K562 (cell line): ENCODE measurements at regions of chr6 and their contacts with region 1.

Region 1: GRCh38 chr6:37691904-37692806 is 5.5 kb downstream of the MDGA1 start:
- DNase-seq: peak; percentile 85 to 91 (median 90)
- ATAC-seq: peak; percentile 96
- H3K4me3 ChIP-seq: no peak overlapping the region
- H3K27ac ChIP-seq: no peak overlapping the region
- H3K4me1 ChIP-seq: peaks cover 0 to 19% of the 10 kb centered on the region in 2 experiments; a peak in 3 of 5 replicates
- H3K27me3 ChIP-seq: peaks cover 45 to 89% of the 10 kb centered on the region in 2 experiments
- CTCF ChIP-seq: peak; percentile 96 to 99 (median 98)
- EP300 ChIP-seq: no peak
- POLR2A ChIP-seq: no peak
- RAD21 ChIP-seq: peak; percentile 98 to 99

Region 2: GRCh38 chr6:37324131-37325033 is 367.8 kb before region 1 on chr6:
- CTCF ChIA-PET with region 1: interaction called, 24 read pairs
- POLR2A ChIA-PET with region 1: interaction called, 3 read pairs
- in situ Hi-C with region 1: no loop called
- intact Hi-C with region 1: loop called (anchors 5 kb)
- DNase-seq: no peak
- ATAC-seq: no peak
- H3K4me3 ChIP-seq: no peak overlapping the region
- H3K27ac ChIP-seq: no peak overlapping the region
- H3K4me1 ChIP-seq: no peaks in the 10 kb centered on the region; a peak in 1 of 5 replicates
- H3K27me3 ChIP-seq: no peaks in the 10 kb centered on the region
- CTCF ChIP-seq: no peak
- EP300 ChIP-seq: no peak
- POLR2A ChIP-seq: no peak
- RAD21 ChIP-seq: no peak

Region 3: DNA sequence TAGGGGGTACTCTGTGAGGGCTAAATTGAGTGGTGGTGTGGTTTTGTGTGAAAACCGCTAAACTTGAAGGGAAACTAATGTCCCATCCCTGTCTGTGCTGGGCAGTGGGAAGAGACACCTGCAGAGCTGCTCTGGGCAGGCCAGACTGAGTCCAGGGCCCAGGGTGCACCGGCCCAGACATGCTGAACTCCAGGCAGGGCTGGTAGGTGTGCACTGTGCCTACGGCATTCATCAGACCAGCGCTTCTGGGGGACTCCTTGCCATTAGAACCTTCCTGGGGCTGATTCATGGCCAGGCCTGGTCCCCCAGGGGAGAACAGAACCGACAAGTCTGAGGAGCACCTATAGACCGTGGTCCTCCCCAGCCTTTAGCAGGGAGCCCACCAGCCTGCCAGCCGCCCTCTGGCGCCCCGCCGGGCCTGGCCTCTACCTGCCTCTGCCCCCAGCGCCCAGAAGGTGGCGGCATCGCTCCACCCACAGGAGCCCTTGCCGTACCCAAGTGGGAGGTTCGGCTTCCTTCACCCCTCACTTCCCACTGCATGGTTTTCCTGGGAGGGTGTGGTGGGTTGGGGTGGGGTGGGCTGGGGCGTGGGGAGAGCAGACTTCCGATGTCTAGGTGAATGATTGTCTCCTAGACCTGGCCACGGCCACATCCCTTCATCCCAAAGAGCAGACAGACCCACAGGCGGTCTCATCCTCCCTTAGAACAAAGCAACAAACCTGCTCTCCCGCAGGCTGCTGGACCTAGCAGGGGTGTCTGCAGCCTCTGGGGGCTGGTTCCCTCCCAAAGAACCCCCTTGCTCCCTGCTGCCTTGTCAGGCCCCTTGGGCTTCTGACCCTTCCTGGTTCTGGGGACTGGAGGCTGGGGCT is 208.0 kb before region 1 on chr6:
- CTCF ChIA-PET with region 1: interaction called, 18 read pairs
- POLR2A ChIA-PET with region 1: no interaction called
- in situ Hi-C with region 1: no loop called
- intact Hi-C with region 1: loop called (anchors 2 kb)
- DNase-seq: peak; percentile 73 to 88 (median 86)
- ATAC-seq: peak; percentile 91
- H3K4me3 ChIP-seq: no peak overlapping the region
- H3K27ac ChIP-seq: no peak overlapping the region
- H3K4me1 ChIP-seq: peaks cover 6 to 21% of the 10 kb centered on the region in 2 experiments; a peak in 4 of 5 replicates
- H3K27me3 ChIP-seq: no peaks in the 10 kb centered on the region
- CTCF ChIP-seq: peak; percentile 83 to 98 (median 96)
- EP300 ChIP-seq: no peak
- POLR2A ChIP-seq: no peak
- RAD21 ChIP-seq: peak; percentile 71 to 87

Region 4: DNA sequence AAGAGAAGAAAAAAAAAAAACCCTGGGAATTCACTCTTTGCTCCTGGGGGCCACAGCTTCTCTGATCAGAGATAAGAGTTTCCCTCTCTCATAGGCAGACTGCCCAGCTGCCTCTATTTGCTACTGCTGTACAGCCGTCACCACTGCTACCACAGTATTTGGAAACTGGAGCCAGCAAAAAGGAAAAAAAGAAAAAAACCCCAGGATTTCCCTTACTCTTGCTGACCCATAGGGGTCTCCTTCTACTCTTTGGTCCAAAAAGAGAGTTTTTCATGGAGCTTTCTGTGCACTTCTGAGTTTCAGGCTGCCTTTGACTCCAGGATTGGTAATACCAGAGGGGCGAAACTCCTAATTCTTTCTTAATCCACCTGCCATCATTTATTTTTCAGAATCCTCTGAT is 84.2 kb before region 1 on chr6:
- CTCF ChIA-PET with region 1: no interaction called
- POLR2A ChIA-PET with region 1: no interaction called
- in situ Hi-C with region 1: no loop called
- intact Hi-C with region 1: loop called (anchors 10 kb)
- DNase-seq: peak in 2 of 4 experiments; percentile 42 to 55
- ATAC-seq: peak; percentile 76
- H3K4me3 ChIP-seq: no peak overlapping the region
- H3K27ac ChIP-seq: no peak overlapping the region
- H3K4me1 ChIP-seq: no peaks in the 10 kb centered on the region
- H3K27me3 ChIP-seq: peaks cover 9 to 45% of the 10 kb centered on the region in 2 experiments; a peak in 4 of 5 replicates
- CTCF ChIP-seq: peak; percentile 54 to 75 (median 60)
- EP300 ChIP-seq: no peak
- POLR2A ChIP-seq: no peak
- RAD21 ChIP-seq: peak; percentile 59 to 70

Region 5: GRCh38 chr6:37653933-37654565 is 38.1 kb before region 1 on chr6:
- CTCF ChIA-PET with region 1: no interaction called
- POLR2A ChIA-PET with region 1: no interaction called
- in situ Hi-C with region 1: no loop called
- intact Hi-C with region 1: loop called (anchors 5 kb)
- DNase-seq: peak; percentile 79 to 90 (median 86)
- ATAC-seq: peak; percentile 83
- H3K4me3 ChIP-seq: no peak overlapping the region
- H3K27ac ChIP-seq: no peak overlapping the region
- H3K4me1 ChIP-seq: peaks cover 0 to 17% of the 10 kb centered on the region in 2 experiments; a peak in 1 of 5 replicates
- H3K27me3 ChIP-seq: peaks cover 11 to 30% of the 10 kb centered on the region in 2 experiments
- CTCF ChIP-seq: peak; percentile 72 to 93 (median 93)
- EP300 ChIP-seq: no peak
- POLR2A ChIP-seq: no peak
- RAD21 ChIP-seq: peak; percentile 64 to 72

Region 6: DNA sequence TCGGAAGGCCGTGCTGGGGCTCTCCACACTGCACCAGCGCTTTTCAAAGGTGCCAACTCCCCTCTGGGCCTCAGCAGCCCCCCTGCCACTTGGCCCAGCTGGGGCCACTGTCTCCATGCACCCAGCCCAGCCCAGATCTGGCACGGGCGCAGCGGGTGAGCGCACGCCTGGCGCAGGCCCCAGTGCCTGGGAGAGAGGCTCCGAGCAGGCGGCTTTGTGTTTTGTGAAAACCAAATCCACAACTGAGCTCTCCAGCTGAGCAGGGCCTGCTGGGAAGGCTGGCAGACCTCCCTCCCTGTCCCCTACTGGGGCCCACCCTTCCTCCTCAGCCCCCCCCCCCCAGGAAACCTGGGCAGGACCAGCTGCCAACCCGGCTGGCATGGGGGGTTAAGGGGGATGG is 11.5 kb before region 1 on chr6:
- CTCF ChIA-PET with region 1: no interaction called
- POLR2A ChIA-PET with region 1: no interaction called
- in situ Hi-C with region 1: no loop called
- intact Hi-C with region 1: no loop called
- DNase-seq: no peak
- ATAC-seq: no peak
- H3K4me3 ChIP-seq: no peak overlapping the region
- H3K27ac ChIP-seq: no peak overlapping the region
- H3K4me1 ChIP-seq: no peaks in the 10 kb centered on the region
- H3K27me3 ChIP-seq: peaks cover 36 to 84% of the 10 kb centered on the region in 2 experiments
- CTCF ChIP-seq: no peak
- EP300 ChIP-seq: no peak
- POLR2A ChIP-seq: no peak
- RAD21 ChIP-seq: no peak

Region 7: GRCh38 chr6:37745748-37746147 is 53.6 kb after region 1 on chr6:
- CTCF ChIA-PET with region 1: no interaction called
- POLR2A ChIA-PET with region 1: no interaction called
- in situ Hi-C with region 1: no loop called
- intact Hi-C with region 1: no loop called
- DNase-seq: no peak
- ATAC-seq: no peak
- H3K4me3 ChIP-seq: no peak overlapping the region
- H3K27ac ChIP-seq: no peak overlapping the region
- H3K4me1 ChIP-seq: no peaks in the 10 kb centered on the region
- H3K27me3 ChIP-seq: peaks cover 54 to 79% of the 10 kb centered on the region in 2 experiments
- CTCF ChIP-seq: no peak
- EP300 ChIP-seq: no peak
- POLR2A ChIP-seq: no peak
- RAD21 ChIP-seq: no peak

Region 8: DNA sequence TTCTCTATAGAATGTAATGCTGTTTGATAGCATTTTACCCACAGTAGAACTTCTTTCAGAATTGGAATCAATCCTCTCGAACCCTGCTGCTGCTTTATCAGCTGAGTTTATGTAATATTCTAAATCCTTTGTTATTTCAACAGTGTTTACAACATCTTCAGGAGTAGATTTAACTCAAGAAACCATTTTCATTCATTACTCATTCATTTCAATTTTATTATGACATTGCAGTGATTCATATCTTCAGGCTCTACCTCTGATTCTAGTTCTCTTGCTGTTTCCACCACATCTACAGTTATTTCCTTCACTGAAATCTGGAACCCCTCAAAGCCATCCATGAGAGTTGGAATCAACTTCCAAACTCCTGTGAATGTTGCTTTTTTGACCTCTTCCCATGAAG is 221.1 kb after region 1 on chr6:
- CTCF ChIA-PET with region 1: no interaction called
- POLR2A ChIA-PET with region 1: no interaction called
- in situ Hi-C with region 1: no loop called
- intact Hi-C with region 1: no loop called
- DNase-seq: no peak
- ATAC-seq: no peak
- H3K4me3 ChIP-seq: no peak overlapping the region
- H3K27ac ChIP-seq: no peak overlapping the region
- H3K4me1 ChIP-seq: no peaks in the 10 kb centered on the region
- H3K27me3 ChIP-seq: no peaks in the 10 kb centered on the region
- CTCF ChIP-seq: no peak
- EP300 ChIP-seq: no peak
- POLR2A ChIP-seq: no peak
- RAD21 ChIP-seq: no peak